HCT116 (cell line): ENCODE measurements at regions of chr19 and their contacts with region 1.

Region 1: GRCh38 chr19:54448774-54449700 is at the start of gene LENG8:
- DNase-seq: peak; percentile 97
- ATAC-seq: peak; percentile 93
- H3K4me3 ChIP-seq: peak within 1 kb of the TSS; percentile 64 to 97
- H3K27ac ChIP-seq: peak within 1 kb of the TSS; percentile 90
- H3K4me1 ChIP-seq: peaks cover 12 to 25% of the 10 kb centered on the region in 2 experiments; a peak in 3 of 4 replicates
- H3K27me3 ChIP-seq: no peaks in the 10 kb centered on the region
- CTCF ChIP-seq: no peak
- POLR2A ChIP-seq: peak; percentile 83
- RAD21 ChIP-seq: no peak
- total RNA-seq, gene LENG8: 196 TPM

Region 2: DNA sequence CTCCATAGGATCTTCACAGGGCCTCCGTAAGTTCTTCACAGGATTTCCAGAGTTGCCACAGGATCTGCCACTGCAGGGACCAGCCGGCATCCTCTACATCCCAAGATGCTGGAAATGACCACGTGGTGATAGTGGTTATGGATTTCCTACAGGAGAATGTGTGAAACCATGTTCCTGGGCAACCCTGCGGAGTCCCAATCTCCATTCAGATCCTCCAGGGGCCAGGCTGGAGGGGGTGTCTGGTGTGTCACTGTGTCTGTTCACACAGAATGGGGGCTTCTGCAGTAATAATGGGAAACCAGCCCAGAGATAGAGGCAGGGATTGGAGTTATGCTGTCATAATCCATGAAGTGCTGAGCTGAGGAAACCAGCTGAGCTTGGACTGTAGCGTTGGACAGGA is 215.1 kb before region 1 on chr19:
- CTCF ChIA-PET with region 1: no interaction called
- POLR2A ChIA-PET with region 1: no interaction called
- RAD21 ChIA-PET with region 1: no interaction called
- intact Hi-C with region 1: no loop called
- DNase-seq: no peak
- ATAC-seq: no peak
- H3K4me3 ChIP-seq: no peak overlapping the region
- H3K27ac ChIP-seq: no peak overlapping the region
- H3K4me1 ChIP-seq: peaks cover 5 to 15% of the 10 kb centered on the region in 2 experiments; a peak in 3 of 4 replicates
- H3K27me3 ChIP-seq: no peaks in the 10 kb centered on the region
- CTCF ChIP-seq: no peak
- POLR2A ChIP-seq: no peak
- RAD21 ChIP-seq: no peak

Region 3: GRCh38 chr19:54463531-54464043 is 14.6 kb after region 1 on chr19 and contains the start of gene LENG9:
- CTCF ChIA-PET with region 1: interaction called, 8 read pairs
- POLR2A ChIA-PET with region 1: interaction called, 17 read pairs
- RAD21 ChIA-PET with region 1: interaction called in 1 of 2 experiments, 3 read pairs
- intact Hi-C with region 1: loop called (anchors 1 kb)
- DNase-seq: peak; percentile 99
- ATAC-seq: peak; percentile 60
- H3K4me3 ChIP-seq: peak within 1 kb of the TSS; percentile 61 to 83
- H3K27ac ChIP-seq: peak within 1 kb of the TSS; percentile 99
- H3K4me1 ChIP-seq: peaks cover 7 to 26% of the 10 kb centered on the region in 2 experiments; a peak in 3 of 4 replicates
- H3K27me3 ChIP-seq: no peaks in the 10 kb centered on the region
- CTCF ChIP-seq: no peak
- POLR2A ChIP-seq: peak; percentile 84
- RAD21 ChIP-seq: no peak
- total RNA-seq, gene LENG9: 9.0 TPM